Activated naive CD4-positive, alpha-beta T cell treated with anti-CD3 and anti-CD28 coated beads for 36 hours (primary cell): ENCODE measurements at regions of chr9 and their contacts with region 1.

Region 1: GRCh38 chr9:15422372-15423230 is at the start of gene SNAPC3:
- DNase-seq: peak; percentile 94
- H3K4me3 Mint-ChIP-seq: peak within 1 kb of the TSS; percentile 89
- H3K27ac Mint-ChIP-seq: peak within 1 kb of the TSS; percentile 86
- H3K4me1 Mint-ChIP-seq: peaks cover 28% of the 10 kb centered on the region
- H3K27me3 Mint-ChIP-seq: no peaks in the 10 kb centered on the region
- total RNA-seq, gene SNAPC3: 30.6 to 32.8 TPM

Region 2: GRCh38 chr9:14693206-14693861 is 729.3 kb before region 1 on chr9 and contains the start of gene ZDHHC21:
- CTCF ChIA-PET with region 1: no interaction called
- intact Hi-C with region 1: loop called (anchors 5 kb)
- DNase-seq: peak; percentile 62
- H3K4me3 Mint-ChIP-seq: peak within 1 kb of the TSS; percentile 89
- H3K27ac Mint-ChIP-seq: peak within 1 kb of the TSS; percentile 79
- H3K4me1 Mint-ChIP-seq: peaks cover 31% of the 10 kb centered on the region
- H3K27me3 Mint-ChIP-seq: peaks cover 8% of the 10 kb centered on the region
- total RNA-seq, gene ZDHHC21: 3.5 to 3.8 TPM

Region 3: DNA sequence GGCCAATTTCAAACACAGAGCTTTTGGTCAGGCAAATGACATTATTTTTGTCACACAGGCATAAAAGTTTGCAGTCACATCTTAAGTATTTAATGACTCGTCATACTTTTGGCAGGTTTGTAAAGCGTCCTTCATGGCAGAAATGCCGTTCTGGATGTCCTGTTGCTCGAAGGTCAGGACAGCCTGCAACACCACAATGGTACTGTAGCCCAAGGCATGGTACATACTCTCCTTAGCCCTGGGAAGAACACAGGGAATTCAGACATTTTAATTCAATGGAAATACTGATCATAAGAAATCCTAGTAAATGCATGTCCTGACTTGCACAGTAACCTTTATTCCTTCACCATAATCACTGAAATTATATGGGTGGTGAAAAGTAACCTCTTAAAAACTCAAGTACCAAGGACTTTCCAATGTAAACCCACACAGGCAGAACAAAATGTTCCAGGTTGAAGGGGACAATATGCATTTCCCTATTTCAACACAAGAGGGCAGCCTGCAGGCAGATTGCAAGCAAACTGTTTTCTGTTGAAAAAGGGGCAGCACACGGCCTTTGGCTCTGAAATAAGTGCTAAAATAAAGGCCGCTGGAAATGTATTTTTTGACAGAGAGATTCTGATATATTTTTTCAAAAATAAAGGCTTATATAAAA is 211.3 kb before region 1 on chr9:
- CTCF ChIA-PET with region 1: interaction called, 8 read pairs
- intact Hi-C with region 1: loop called (anchors 1 kb)
- DNase-seq: peak; percentile 69
- H3K4me3 Mint-ChIP-seq: no peak overlapping the region
- H3K27ac Mint-ChIP-seq: no peak overlapping the region
- H3K4me1 Mint-ChIP-seq: peaks cover 14% of the 10 kb centered on the region
- H3K27me3 Mint-ChIP-seq: no peaks in the 10 kb centered on the region

Region 4: DNA sequence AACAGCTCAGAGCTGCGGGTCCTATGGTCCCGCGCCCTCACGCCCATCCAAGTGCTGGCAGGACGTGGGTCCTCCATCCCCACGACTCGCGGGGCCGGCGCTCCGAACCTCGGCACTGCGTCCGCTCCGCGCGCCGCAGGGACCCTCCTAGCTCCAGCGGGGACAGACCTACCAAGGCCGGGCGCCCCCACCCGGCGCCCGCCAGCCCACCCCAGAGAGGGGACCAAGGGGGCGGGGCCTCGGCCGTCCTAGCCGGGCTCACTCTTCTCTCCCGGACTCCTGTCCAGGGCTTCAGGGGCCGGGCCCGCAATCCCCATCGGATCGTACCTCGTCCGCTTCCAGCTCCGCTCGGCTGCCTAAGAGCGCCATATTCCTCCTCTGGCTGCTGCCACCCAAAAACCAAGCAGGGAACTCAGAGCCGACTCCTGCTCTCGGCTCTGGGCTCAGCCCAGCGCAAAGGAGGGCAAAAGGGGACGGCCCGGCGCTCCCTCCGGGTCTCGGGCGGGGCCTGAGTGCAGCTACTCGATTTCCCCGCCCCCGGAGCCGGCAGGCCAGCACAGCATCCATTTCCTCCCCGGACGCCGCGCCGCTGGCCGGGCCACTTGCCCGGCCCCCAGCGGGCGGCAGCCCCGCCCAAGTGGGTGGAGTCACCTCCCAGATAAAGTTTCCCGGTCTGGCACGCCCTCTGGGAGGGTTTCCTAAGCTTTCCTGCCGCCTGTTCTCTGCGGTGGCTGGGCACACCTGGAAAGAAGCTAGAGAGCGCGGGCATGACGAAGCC is 115.7 kb before region 1 on chr9 and contains the start of gene TTC39B:
- CTCF ChIA-PET with region 1: interaction called, 5 read pairs
- intact Hi-C with region 1: loop called (anchors 1 kb)
- DNase-seq: peak; percentile 86
- H3K4me3 Mint-ChIP-seq: peak within 1 kb of the TSS; percentile 99
- H3K27ac Mint-ChIP-seq: peak within 1 kb of the TSS; percentile 95
- H3K4me1 Mint-ChIP-seq: peaks cover 57% of the 10 kb centered on the region
- H3K27me3 Mint-ChIP-seq: no peaks in the 10 kb centered on the region
- total RNA-seq, gene TTC39B: 43.9 to 46.4 TPM

Region 5: DNA sequence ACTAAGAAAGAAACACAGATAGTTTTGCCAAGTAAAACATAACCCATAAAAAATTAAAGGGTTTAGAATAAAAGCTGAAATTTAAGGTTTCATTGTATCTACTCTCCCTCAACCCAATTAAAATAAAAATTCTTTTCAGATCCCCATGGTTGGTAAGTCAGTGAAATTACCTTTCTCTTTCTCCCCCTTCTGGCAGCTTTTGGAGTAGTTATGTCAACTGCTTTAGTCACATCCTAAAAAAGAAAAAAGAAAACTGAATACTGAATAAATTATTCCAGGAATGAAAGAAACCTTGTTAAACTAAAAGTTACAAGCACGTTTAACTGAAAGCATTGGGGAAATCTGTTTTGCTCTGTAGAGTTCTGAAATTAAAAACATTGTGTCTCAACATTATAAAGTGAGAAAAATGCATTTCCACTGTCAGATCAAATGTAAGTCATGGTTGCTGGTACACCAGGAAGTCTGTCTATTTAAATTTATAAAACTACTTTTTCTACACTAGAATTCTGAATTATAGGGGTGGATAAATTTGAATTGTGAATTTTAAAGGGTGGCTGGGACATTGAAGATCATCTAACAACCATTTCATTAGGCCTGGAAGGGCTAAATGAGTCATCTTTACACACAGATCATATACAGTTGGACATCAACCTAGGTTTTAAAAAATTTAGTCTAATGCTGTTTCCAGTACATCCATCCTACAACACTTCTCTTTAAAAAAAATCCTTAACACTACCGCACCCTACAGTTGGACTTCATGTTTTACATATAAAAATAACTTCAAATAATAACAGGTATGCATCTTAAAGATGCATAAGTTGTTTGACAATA is 63.5 kb after region 1 on chr9:
- CTCF ChIA-PET with region 1: no interaction called
- intact Hi-C with region 1: loop called (anchors 1 kb)
- DNase-seq: no peak
- H3K4me3 Mint-ChIP-seq: no peak overlapping the region
- H3K27ac Mint-ChIP-seq: peak overlapping the region; percentile 80
- H3K4me1 Mint-ChIP-seq: peaks cover 47% of the 10 kb centered on the region
- H3K27me3 Mint-ChIP-seq: no peaks in the 10 kb centered on the region

Region 6: DNA sequence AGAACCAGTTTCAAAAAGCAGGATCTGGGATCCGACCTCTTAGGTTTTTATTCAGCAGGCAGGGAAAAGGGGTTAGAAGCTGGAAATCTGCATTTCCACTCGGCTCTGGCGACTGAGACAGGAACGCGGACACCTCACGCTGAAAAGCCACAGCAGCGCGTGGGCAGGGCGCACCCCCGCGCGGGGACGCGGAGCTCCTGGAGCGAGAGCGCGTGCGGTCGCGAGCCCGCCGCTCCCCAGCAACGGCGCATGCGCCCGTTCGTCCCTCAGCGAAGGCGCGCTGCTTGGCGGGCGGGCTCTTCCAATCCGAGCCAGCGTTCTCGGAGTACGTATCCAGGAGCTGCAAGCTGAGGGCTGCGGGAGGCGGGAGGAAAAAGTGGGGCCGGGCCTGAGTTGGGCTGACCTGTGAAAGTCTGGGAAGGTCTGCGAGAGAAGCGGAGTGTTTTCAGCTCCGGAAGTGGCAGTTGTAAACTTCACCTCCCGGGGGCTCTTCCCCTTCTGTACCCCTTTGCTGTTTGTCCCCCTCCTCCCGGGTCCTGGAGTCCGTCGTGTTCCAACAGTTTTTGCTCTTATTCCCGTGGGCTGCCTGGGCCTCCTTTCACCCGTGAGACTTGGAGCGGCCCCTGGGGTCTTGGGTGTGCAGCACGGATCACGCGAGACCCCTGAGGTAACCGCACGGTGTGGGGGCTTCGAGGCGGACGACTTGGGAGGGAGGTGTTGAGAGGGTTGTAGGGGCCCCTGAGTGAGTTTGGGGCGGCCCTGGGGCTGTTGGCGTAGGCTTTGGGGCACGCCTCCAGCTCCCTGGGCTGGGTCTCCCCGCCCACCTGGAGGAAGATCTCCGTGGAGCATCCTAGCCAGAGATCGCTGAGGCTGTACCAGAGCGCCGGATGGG is 130.3 kb after region 1 on chr9 and contains the start of gene CCDC171:
- CTCF ChIA-PET with region 1: no interaction called
- intact Hi-C with region 1: loop called (anchors 1 kb)
- DNase-seq: peak; percentile 90
- H3K4me3 Mint-ChIP-seq: peak within 1 kb of the TSS; percentile 86
- H3K27ac Mint-ChIP-seq: peak within 1 kb of the TSS; percentile 78
- H3K4me1 Mint-ChIP-seq: peaks cover 5% of the 10 kb centered on the region
- H3K27me3 Mint-ChIP-seq: no peaks in the 10 kb centered on the region
- total RNA-seq, gene CCDC171: 2.0 to 2.7 TPM